Left cardiac atrium (tissue), 4 donors: ENCODE measurements at regions of chr6 and their contacts with region 1.

Region 1: GRCh38 chr6:149513915-149514314 is 29.1 kb upstream of the ZC3H12D start:
- DNase-seq: no peak
- ATAC-seq: peak; percentile 38 to 61

Region 2: DNA sequence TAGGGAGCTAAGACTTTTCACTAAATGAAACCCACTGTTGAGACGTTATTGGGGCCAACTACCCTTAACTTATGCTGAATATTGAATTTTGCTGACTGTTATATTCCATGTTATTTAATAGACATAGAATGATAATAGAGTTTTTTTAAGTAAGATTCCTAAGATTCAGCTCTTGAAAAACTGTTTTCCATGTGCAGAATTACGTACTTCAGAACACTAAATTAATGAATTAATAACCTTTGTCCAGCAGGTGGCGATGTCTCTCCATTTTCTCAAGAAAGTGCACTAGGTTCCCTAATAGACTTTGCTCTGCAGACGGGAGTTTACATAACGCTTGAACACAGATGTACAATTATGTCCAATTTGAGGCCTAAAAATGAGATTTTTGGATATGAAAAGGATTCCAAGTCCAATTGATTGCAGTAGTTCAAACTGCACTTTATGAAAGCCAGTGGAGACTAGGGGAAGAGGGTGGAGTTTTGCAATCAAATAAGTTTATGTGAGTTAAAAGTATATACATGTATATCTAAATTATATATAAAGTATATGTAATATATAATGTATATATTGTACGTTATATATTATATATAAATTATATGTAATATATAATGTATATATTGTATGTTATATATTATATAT is 485.0 kb before region 1 on chr6:
- intact Hi-C with region 1: loop called (anchors 5 to 10 kb)
- DNase-seq: peak; percentile 56
- ATAC-seq: peak; percentile 44 to 69

Region 3: GRCh38 chr6:149082286-149082707 is 431.6 kb before region 1 on chr6:
- intact Hi-C with region 1: loop called in 1 of 2 experiments (anchors 5 kb)
- DNase-seq: peak; percentile 84
- ATAC-seq: peak; percentile 72 to 74

Region 4: GRCh38 chr6:149454386-149454848 is 59.5 kb before region 1 on chr6:
- intact Hi-C with region 1: loop called in 1 of 2 experiments (anchors 10 kb)
- DNase-seq: peak; percentile 97
- ATAC-seq: peak; percentile 88 to 90